HCT116 (cell line): ENCODE measurements at regions of chr1 and their contacts with region 1.

Region 1: GRCh38 chr1:160006312-160006940 is 25.4 kb downstream of the PIGM start:
- DNase-seq: peak; percentile 64
- ATAC-seq: peak; percentile 94
- H3K4me3 ChIP-seq: no peak overlapping the region
- H3K27ac ChIP-seq: no peak overlapping the region
- H3K4me1 ChIP-seq: no peaks in the 10 kb centered on the region
- H3K27me3 ChIP-seq: no peaks in the 10 kb centered on the region
- CTCF ChIP-seq: peak; percentile 94 to 98 (median 95)
- POLR2A ChIP-seq: no peak
- RAD21 ChIP-seq: peak; percentile 88

Region 2: DNA sequence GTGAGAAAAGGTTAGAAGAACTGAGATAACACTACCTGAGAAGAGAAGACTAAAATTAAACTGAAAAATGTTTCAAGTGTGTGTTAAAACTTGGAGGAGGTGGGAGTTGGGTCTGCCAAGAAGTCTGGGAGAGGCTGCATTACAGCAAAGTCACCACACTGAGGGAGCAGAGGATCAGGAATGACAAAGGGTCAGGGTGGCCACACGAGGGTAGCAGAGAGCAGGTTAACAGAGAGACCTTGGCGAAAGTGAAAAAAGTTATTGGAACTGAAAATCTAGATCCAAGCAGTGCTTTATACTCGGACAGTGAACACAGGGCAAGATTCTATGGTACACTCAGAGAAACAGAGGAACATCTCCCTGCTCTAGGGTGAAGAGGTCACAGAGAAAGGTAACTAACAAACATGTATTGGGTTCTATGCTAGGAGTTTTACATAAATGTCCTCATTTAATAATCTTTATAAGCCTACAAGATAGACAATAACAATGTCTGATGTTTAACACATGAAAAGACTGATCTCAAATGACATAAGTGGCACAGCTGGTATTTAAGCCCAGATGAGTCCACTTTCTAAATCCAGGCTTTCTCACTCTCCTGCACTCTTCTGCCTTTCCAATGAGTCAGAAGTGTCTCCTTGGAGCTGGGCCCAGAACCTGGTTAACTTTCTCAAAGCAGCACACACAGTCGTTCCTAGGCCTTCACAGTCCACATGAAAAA is 845.3 kb before region 1 on chr1:
- CTCF ChIA-PET with region 1: no interaction called
- POLR2A ChIA-PET with region 1: no interaction called
- RAD21 ChIA-PET with region 1: no interaction called
- intact Hi-C with region 1: loop called (anchors 10 kb)
- DNase-seq: peak; percentile 50
- ATAC-seq: peak; percentile 95
- H3K4me3 ChIP-seq: no peak overlapping the region
- H3K27ac ChIP-seq: no peak overlapping the region
- H3K4me1 ChIP-seq: no peaks in the 10 kb centered on the region
- H3K27me3 ChIP-seq: peaks cover 11% of the 10 kb centered on the region
- CTCF ChIP-seq: peak; percentile 87 to 99 (median 95)
- POLR2A ChIP-seq: no peak
- RAD21 ChIP-seq: peak; percentile 91

Region 3: DNA sequence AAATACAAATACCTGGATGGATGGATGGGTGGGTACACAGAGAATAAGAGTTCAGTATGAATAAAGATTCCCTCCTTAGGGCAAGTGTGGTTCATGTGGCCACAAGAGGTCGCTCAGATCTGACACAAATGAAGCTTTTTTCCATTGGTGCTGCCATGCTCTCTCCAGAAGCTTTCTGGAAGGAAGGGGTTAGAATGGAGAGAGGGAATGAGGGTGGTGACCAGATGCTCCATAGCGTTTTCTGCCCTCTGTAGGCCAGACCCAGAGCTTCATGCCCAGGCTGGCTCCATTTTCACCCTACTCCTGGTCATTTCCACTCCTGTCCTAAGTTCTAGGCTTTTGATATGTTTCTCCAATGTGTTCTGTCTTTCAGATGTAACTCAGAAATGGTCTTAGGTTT is 207.5 kb before region 1 on chr1:
- CTCF ChIA-PET with region 1: interaction called, 53 read pairs
- POLR2A ChIA-PET with region 1: no interaction called
- RAD21 ChIA-PET with region 1: interaction called in 1 of 2 experiments, 5 read pairs
- intact Hi-C with region 1: loop called (anchors 2 kb)
- DNase-seq: peak; percentile 90
- ATAC-seq: peak; percentile 97
- H3K4me3 ChIP-seq: no peak overlapping the region
- H3K27ac ChIP-seq: no peak overlapping the region
- H3K4me1 ChIP-seq: no peaks in the 10 kb centered on the region
- H3K27me3 ChIP-seq: peaks cover 24% of the 10 kb centered on the region
- CTCF ChIP-seq: peak; percentile 83 to 99 (median 91)
- POLR2A ChIP-seq: no peak
- RAD21 ChIP-seq: peak; percentile 96

Region 4: GRCh38 chr1:159916184-159917051 is 90.0 kb before region 1 on chr1:
- CTCF ChIA-PET with region 1: interaction called, 13 read pairs
- POLR2A ChIA-PET with region 1: no interaction called
- RAD21 ChIA-PET with region 1: no interaction called
- intact Hi-C with region 1: no loop called
- DNase-seq: no peak
- ATAC-seq: no peak
- H3K4me3 ChIP-seq: no peak overlapping the region
- H3K27ac ChIP-seq: no peak overlapping the region
- H3K4me1 ChIP-seq: peaks cover 21 to 45% of the 10 kb centered on the region in 2 experiments
- H3K27me3 ChIP-seq: no peaks in the 10 kb centered on the region
- CTCF ChIP-seq: no peak
- POLR2A ChIP-seq: no peak
- RAD21 ChIP-seq: no peak

Region 5: GRCh38 chr1:159945483-159946241 is 60.8 kb before region 1 on chr1 and contains the start of gene IGSF9:
- CTCF ChIA-PET with region 1: interaction called, 170 read pairs
- POLR2A ChIA-PET with region 1: no interaction called
- RAD21 ChIA-PET with region 1: interaction called, 5 read pairs
- intact Hi-C with region 1: no loop called
- DNase-seq: peak; percentile 78
- ATAC-seq: peak; percentile 94
- H3K4me3 ChIP-seq: peak within 1 kb of the TSS; percentile 54 to 63
- H3K27ac ChIP-seq: peak within 1 kb of the TSS; percentile 64
- H3K4me1 ChIP-seq: peaks cover 14 to 25% of the 10 kb centered on the region in 2 experiments
- H3K27me3 ChIP-seq: no peaks in the 10 kb centered on the region
- CTCF ChIP-seq: peak; percentile 29 to 52 (median 48); a peak in 4 of 6 replicates
- POLR2A ChIP-seq: peak; percentile 41
- RAD21 ChIP-seq: peak; percentile 51
- total RNA-seq, gene IGSF9: 10.3 TPM

Region 6: DNA sequence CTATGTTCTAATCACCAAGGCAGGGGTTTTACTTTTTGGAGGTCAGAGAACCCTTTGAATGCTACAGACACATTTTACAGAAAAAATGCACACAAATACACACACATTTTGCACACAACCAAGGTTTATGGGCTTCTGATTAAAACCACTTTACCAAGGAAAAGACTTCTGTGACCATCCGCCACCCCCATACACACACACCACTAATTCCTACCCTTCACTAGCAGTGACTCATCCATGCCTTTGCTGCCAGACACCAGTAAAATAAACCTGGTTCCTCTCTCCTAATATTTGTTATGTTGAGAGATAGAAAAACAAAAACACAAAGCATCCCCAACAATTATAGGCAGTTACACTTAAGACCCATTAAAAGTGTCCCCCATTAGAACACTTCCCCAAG is 12.5 kb after region 1 on chr1:
- CTCF ChIA-PET with region 1: interaction called, 52 read pairs
- POLR2A ChIA-PET with region 1: interaction called, 3 read pairs
- RAD21 ChIA-PET with region 1: no interaction called
- intact Hi-C with region 1: no loop called
- DNase-seq: no peak
- ATAC-seq: no peak
- H3K4me3 ChIP-seq: no peak overlapping the region
- H3K27ac ChIP-seq: no peak overlapping the region
- H3K4me1 ChIP-seq: peaks cover 0 to 6% of the 10 kb centered on the region in 2 experiments; a peak in 1 of 4 replicates
- H3K27me3 ChIP-seq: no peaks in the 10 kb centered on the region
- CTCF ChIP-seq: no peak
- POLR2A ChIP-seq: no peak
- RAD21 ChIP-seq: no peak

Region 7: GRCh38 chr1:160161965-160162705 is 155.7 kb after region 1 on chr1:
- CTCF ChIA-PET with region 1: no interaction called
- POLR2A ChIA-PET with region 1: no interaction called
- RAD21 ChIA-PET with region 1: no interaction called
- intact Hi-C with region 1: no loop called
- DNase-seq: no peak
- ATAC-seq: peak; percentile 93
- H3K4me3 ChIP-seq: no peak overlapping the region
- H3K27ac ChIP-seq: no peak overlapping the region
- H3K4me1 ChIP-seq: no peaks in the 10 kb centered on the region
- H3K27me3 ChIP-seq: no peaks in the 10 kb centered on the region
- CTCF ChIP-seq: peak; percentile 43 to 61 (median 55); a peak in 5 of 6 replicates
- POLR2A ChIP-seq: no peak
- RAD21 ChIP-seq: peak; percentile 59

Region 8: GRCh38 chr1:160330129-160330528 is 323.7 kb after region 1 on chr1:
- CTCF ChIA-PET with region 1: no interaction called
- POLR2A ChIA-PET with region 1: no interaction called
- RAD21 ChIA-PET with region 1: no interaction called
- intact Hi-C with region 1: no loop called
- DNase-seq: no peak
- ATAC-seq: no peak
- H3K4me3 ChIP-seq: no peak overlapping the region
- H3K27ac ChIP-seq: no peak overlapping the region
- H3K4me1 ChIP-seq: no peaks in the 10 kb centered on the region
- H3K27me3 ChIP-seq: no peaks in the 10 kb centered on the region
- CTCF ChIP-seq: no peak
- POLR2A ChIP-seq: no peak
- RAD21 ChIP-seq: no peak